Naive thymus-derived CD4-positive, alpha-beta T cell (primary cell): ENCODE measurements at regions of chr6 and their contacts with region 1.

Region 1: DNA sequence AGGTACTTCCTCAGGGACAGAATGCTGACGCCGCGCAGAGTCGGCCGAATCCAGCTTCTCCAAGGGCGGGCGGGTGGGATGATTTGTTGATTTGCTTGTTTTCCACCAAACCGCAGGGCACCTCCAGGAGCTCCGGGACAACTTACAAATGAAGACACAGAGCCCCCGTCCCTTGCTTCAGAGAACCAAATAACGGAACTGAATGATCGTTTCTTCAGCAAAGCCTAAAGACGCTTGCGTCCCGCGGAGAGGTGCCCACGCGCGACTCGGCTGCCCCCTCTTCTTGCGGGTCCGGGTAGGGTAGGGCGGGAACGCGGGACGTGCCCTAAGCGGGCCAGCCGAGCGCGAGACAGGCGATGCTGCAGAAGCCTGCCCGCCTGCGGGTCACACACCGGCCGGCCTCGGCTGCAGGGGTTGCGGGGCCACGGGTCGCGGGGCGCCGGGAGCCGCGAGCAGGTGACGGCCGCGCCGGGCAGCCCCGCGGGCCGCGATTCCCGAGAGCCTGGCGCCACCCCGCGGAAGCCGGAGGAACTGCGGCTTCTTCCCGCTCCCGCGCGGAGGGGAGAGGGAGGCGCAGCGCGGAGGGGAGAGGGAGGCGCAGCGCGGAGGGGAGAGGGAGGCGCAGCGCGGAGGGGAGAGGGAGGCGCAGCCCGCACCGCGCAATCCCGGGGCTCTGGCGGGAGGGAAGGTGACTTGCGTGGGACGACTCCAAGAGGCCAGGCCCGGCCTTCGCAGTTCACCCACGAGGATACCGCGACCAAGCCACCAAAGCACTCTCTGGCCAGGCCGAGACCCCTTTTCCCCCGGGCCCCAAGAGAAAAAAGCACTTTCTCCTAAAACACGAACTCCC is 7.7 kb upstream of the FOXF2 start:
- DNase-seq: peak in 8 of 9 donors; percentile 7 to 77 (median 49)
- ATAC-seq: peak; percentile 78
- H3K4me3 ChIP-seq: no peak overlapping the region
- H3K4me3 Mint-ChIP-seq: peak overlapping the region; percentile 31 to 75 (median 52)
- H3K27ac ChIP-seq: no peak overlapping the region
- H3K27ac Mint-ChIP-seq: no peak overlapping the region
- H3K4me1 ChIP-seq: peaks cover 0 to 16% of the 10 kb centered on the region in 2 donors
- H3K4me1 Mint-ChIP-seq: peaks cover 21 to 50% (median 37%) of the 10 kb centered on the region in 7 donors
- H3K27me3 ChIP-seq: peaks cover 8 to 20% of the 10 kb centered on the region in 2 donors
- H3K27me3 Mint-ChIP-seq: peaks cover 54 to 81% (median 57%) of the 10 kb centered on the region in 5 donors

Region 2: GRCh38 chr6:722077-722524 is 659.6 kb before region 1 on chr6:
- CTCF ChIA-PET with region 1: no interaction called
- POLR2A ChIA-PET with region 1: no interaction called
- intact Hi-C with region 1: loop called in 1 of 2 experiments (anchors 5 kb)
- DNase-seq: peak; percentile 37 to 73 (median 61)
- ATAC-seq: peak; percentile 89
- H3K4me3 ChIP-seq: no peak overlapping the region
- H3K4me3 Mint-ChIP-seq: peak overlapping the region in 1 of 10 donors; percentile 9
- H3K27ac ChIP-seq: no peak overlapping the region
- H3K27ac Mint-ChIP-seq: peak overlapping the region in 1 of 9 donors; percentile 25
- H3K4me1 ChIP-seq: no peaks in the 10 kb centered on the region
- H3K4me1 Mint-ChIP-seq: peaks cover 0 to 11% (median 6%) of the 10 kb centered on the region in 7 donors
- H3K27me3 ChIP-seq: no peaks in the 10 kb centered on the region
- H3K27me3 Mint-ChIP-seq: peaks cover 0 to 29% (median 16%) of the 10 kb centered on the region in 5 donors

Region 3: DNA sequence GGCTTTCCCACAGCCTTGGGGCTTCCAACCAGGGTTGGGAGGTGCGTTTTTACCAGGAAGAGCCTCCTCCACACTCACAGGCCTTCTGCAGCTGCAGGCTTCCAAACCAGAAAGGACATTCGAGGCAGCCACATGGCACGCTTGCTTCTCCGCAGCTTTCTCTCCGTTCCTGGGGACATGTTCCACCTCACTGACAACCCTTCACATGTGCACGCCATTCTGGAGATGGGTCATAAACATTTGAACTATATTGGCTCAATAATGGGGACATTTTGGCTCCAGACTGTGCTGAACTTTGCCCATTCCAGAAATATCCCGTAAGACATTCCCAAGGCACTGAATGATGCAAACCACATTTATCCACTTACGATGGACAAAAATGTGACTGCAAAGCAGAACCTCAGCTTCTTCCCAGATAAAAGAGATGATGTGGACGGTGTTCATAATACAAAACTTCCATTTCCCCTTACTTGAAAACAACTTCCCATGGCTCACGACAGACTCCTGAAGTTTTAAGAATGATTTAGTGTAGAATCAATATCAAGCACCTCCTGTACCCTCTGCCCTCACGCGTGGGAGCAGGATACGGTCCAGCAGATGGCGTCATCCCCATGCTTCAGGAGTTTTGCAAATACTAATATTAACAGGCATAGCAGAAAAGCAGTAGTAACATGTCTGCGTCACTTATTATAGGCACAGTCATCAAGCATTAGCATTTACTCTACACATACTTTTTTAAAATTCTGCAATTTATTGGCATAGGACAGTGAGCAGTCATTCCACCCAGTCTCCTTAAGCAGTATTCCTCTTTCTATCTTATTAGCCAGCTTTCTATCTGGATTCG is 17.8 kb before region 1 on chr6:
- CTCF ChIA-PET with region 1: no interaction called
- POLR2A ChIA-PET with region 1: no interaction called
- intact Hi-C with region 1: no loop called
- DNase-seq: no peak
- ATAC-seq: no peak
- H3K4me3 ChIP-seq: no peak overlapping the region
- H3K4me3 Mint-ChIP-seq: no peak overlapping the region
- H3K27ac ChIP-seq: no peak overlapping the region
- H3K27ac Mint-ChIP-seq: no peak overlapping the region
- H3K4me1 ChIP-seq: no peaks in the 10 kb centered on the region
- H3K4me1 Mint-ChIP-seq: no peaks in the 10 kb centered on the region
- H3K27me3 ChIP-seq: no peaks in the 10 kb centered on the region
- H3K27me3 Mint-ChIP-seq: peaks cover 41 to 62% (median 56%) of the 10 kb centered on the region in 5 donors

Region 4: DNA sequence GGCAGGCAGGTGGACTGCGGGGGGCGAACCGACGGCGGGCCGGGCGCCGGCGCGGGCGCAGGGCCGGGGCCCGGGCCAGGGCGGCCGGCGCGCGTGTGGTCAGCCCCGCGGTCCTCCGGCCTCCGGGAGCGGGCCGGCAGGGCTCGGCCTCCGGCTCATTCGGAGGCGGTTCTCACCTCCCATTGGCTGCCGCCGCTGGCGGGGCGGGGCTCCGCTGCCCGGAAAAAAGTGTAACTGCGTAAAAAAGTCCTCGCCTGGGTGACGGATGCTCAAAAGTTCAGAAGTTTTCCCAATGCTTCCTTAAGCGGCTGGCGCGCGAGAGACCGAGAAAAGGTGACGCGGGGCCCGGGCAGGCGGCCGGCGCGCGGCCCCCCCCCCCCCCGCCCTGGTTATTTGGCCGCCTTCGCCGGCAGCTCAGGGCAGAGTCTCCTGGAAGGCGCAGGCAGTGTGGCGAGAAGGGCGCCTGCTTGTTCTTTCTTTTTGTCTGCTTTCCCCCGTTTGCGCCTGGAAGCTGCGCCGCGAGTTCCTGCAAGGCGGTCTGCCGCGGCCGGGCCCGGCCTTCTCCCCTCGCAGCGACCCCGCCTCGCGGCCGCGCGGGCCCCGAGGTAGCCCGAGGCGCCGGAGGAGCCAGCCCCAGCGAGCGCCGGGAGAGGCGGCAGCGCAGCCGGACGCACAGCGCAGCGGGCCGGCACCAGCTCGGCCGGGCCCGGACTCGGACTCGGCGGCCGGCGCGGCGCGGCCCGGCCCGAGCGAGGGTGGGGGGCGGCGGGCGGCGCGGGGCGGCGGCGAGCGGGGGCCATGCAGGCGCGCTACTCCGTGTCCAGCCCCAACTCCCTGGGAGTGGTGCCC is 228.2 kb after region 1 on chr6 and contains the start of gene FOXC1:
- CTCF ChIA-PET with region 1: no interaction called
- POLR2A ChIA-PET with region 1: no interaction called
- intact Hi-C with region 1: loop called in 1 of 2 experiments (anchors 2 kb)
- DNase-seq: peak in 1 of 9 donors; percentile 61
- ATAC-seq: peak; percentile 54
- H3K4me3 ChIP-seq: peak within 1 kb of the TSS; percentile 26
- H3K4me3 Mint-ChIP-seq: peak within 1 kb of the TSS; percentile 75 to 88 (median 82)
- H3K27ac ChIP-seq: no peak within 1 kb of the TSS
- H3K27ac Mint-ChIP-seq: peak within 1 kb of the TSS in 1 of 9 donors; percentile 84
- H3K4me1 ChIP-seq: peaks cover 22 to 27% of the 10 kb centered on the region in 2 donors
- H3K4me1 Mint-ChIP-seq: peaks cover 35 to 65% (median 55%) of the 10 kb centered on the region in 7 donors
- H3K27me3 ChIP-seq: peaks cover 20 to 36% of the 10 kb centered on the region in 2 donors
- H3K27me3 Mint-ChIP-seq: peaks cover 55 to 67% (median 65%) of the 10 kb centered on the region in 5 donors
- total RNA-seq, gene FOXC1: not detected

Region 5: GRCh38 chr6:2403546-2403945 is 1021.8 kb after region 1 on chr6:
- CTCF ChIA-PET with region 1: no interaction called
- POLR2A ChIA-PET with region 1: no interaction called
- intact Hi-C with region 1: no loop called
- DNase-seq: no peak
- ATAC-seq: no peak
- H3K4me3 ChIP-seq: no peak overlapping the region
- H3K4me3 Mint-ChIP-seq: no peak overlapping the region
- H3K27ac ChIP-seq: no peak overlapping the region
- H3K27ac Mint-ChIP-seq: no peak overlapping the region
- H3K4me1 ChIP-seq: no peaks in the 10 kb centered on the region
- H3K4me1 Mint-ChIP-seq: no peaks in the 10 kb centered on the region
- H3K27me3 ChIP-seq: no peaks in the 10 kb centered on the region
- H3K27me3 Mint-ChIP-seq: no peaks in the 10 kb centered on the region